Activated CD8-positive, alpha-beta memory T cell treated with anti-CD3 and anti-CD28 coated beads, Interleukin-2, amount 10 ng/mL, durations not matched to agents 7 days and 5 days (primary cell): ENCODE measurements at regions of chr19 and their contacts with region 1.

Region 1: GRCh38 chr19:41753936-41754529 is 1.3 kb upstream of the CEACAM6 start:
- DNase-seq: peak; percentile 76
- ATAC-seq: peak; percentile 87
- H3K4me3 Mint-ChIP-seq: no peak overlapping the region
- H3K27ac Mint-ChIP-seq: no peak overlapping the region
- H3K4me1 Mint-ChIP-seq: peaks cover 2% of the 10 kb centered on the region
- H3K27me3 Mint-ChIP-seq: peaks cover 42% of the 10 kb centered on the region

Region 2: DNA sequence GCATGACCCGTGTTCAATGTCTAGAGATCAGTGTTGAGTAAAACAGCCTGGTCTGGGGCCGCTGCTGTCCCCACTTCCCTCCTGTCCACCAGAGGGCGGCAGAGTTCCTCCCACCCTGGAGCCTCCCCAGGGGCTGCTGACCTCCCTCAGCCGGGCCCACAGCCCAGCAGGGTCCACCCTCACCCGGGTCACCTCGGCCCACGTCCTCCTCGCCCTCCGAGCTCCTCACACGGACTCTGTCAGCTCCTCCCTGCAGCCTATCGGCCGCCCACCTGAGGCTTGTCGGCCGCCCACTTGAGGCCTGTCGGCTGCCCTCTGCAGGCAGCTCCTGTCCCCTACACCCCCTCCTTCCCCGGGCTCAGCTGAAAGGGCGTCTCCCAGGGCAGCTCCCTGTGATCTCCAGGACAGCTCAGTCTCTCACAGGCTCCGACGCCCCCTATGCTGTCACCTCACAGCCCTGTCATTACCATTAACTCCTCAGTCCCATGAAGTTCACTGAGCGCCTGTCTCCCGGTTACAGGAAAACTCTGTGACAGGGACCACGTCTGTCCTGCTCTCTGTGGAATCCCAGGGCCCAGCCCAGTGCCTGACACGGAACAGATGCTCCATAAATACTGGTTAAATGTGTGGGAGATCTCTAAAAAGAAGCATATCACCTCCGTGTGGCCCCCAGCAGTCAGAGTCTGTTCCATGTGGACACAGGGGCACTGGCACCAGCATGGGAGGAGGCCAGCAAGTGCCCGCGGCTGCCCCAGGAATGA is 47.1 kb before region 1 on chr19:
- CTCF ChIA-PET with region 1: interaction called, 27 read pairs
- DNase-seq: peak; percentile 77
- ATAC-seq: peak; percentile 94
- H3K4me3 Mint-ChIP-seq: peak overlapping the region; percentile 63
- H3K27ac Mint-ChIP-seq: peak overlapping the region; percentile 19
- H3K4me1 Mint-ChIP-seq: peaks cover 3% of the 10 kb centered on the region
- H3K27me3 Mint-ChIP-seq: peaks cover 19% of the 10 kb centered on the region

Region 3: DNA sequence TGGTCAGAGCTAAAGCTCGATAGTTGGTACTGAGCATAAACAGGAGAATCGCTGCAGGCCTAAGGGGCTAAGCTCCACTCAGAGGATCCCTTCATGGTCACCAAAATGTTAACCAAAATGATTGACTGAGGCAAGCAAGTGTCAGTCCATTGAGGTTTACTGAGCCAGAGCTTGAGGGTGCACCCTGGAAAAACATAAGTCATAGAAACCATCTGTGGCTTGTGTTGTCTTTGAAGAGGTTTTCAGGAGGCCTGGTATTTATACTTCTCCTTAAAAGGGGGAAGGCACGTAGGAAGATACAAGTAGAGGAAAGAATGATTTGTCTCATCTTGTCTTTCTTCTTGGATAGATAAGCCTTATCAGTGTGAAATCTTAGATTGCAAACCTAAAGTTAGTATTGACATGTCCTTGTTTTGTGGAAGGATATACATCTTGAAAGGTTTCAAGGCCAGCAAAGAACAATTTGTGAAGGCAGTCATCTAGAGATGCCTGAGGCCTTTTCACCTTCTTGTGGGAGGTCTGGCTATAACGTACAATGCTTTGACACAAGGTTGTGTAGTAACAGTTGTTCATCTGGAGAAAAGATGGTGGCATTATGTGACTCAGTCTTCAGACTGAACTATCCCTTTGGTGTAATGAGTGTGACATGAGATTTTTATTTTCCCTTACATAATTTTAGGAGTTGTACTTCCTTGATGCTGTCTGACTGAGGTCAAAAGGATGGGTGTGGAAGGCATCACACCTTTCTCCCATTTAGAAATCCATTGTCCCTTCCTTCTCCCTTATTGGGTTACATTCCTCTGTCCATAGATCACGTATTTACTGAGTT is 13.4 kb before region 1 on chr19:
- CTCF ChIA-PET with region 1: interaction called, 20 read pairs
- DNase-seq: no peak
- ATAC-seq: peak; percentile 36
- H3K4me3 Mint-ChIP-seq: no peak overlapping the region
- H3K27ac Mint-ChIP-seq: no peak overlapping the region
- H3K4me1 Mint-ChIP-seq: peaks cover 10% of the 10 kb centered on the region
- H3K27me3 Mint-ChIP-seq: peaks cover 46% of the 10 kb centered on the region

Region 4: DNA sequence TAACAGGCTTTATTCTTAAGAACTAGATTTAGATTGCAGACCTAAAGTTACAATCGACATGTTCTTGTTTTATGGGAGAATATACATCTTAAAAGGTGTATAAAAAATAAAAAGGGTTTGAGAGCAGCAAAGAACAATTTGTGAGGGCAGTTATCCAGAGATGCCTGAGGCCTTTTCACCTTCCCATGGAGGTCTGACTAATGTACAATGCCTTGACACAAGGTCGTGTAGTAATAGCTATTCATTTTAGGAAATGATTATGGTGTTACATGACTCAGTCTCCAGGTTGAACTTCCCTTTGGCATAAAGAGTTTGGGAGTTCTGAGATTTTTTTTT is 21.3 kb after region 1 on chr19:
- CTCF ChIA-PET with region 1: interaction called, 136 read pairs
- DNase-seq: no peak
- ATAC-seq: no peak
- H3K4me3 Mint-ChIP-seq: no peak overlapping the region
- H3K27ac Mint-ChIP-seq: no peak overlapping the region
- H3K4me1 Mint-ChIP-seq: peaks cover 23% of the 10 kb centered on the region
- H3K27me3 Mint-ChIP-seq: peaks cover 79% of the 10 kb centered on the region

Region 5: DNA sequence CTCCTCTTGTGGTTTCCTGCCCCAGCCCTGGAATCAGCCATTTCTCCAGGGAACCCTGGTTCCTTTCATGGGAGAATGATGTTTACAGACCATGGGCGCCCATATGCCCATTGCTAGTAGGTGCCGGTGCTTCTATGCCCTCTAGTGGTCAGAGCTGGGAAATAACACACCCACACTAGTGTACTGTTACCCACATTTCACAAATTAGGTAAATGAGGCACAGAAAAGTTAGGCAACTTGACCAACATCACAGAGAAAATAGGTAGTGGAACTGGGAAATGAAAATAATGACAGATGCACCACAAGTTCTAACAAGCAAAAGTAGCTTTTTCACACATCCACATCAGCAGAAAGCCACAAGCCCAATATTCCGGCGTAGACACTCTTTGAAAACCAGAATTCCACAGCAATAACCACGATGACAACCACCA is 41.0 kb after region 1 on chr19:
- CTCF ChIA-PET with region 1: interaction called, 72 read pairs
- DNase-seq: peak; percentile 71
- ATAC-seq: peak; percentile 95
- H3K4me3 Mint-ChIP-seq: no peak overlapping the region
- H3K27ac Mint-ChIP-seq: no peak overlapping the region
- H3K4me1 Mint-ChIP-seq: no peaks in the 10 kb centered on the region
- H3K27me3 Mint-ChIP-seq: peaks cover 37% of the 10 kb centered on the region